ENCODE measurements at regions of chr22 and their contacts with region 1.

Region 1: GRCh38 chr22:37608477-37609239 is at the start of gene GGA1:
- DNase-seq: peak; percentile 94
- ATAC-seq: peak; percentile 85
- H3K4me3 ChIP-seq: peak within 1 kb of the TSS; percentile 78 to 92 (median 82)
- H3K27ac ChIP-seq: peak within 1 kb of the TSS; percentile 97
- H3K4me1 ChIP-seq: peaks cover 46% of the 10 kb centered on the region
- H3K27me3 ChIP-seq: peaks cover 2 to 5% of the 10 kb centered on the region in 2 experiments; a peak in 1 of 5 replicates
- CTCF ChIP-seq: no peak
- EP300 ChIP-seq: no peak; a peak in 1 of 4 replicates
- POLR2A ChIP-seq: peak; percentile 61 to 69
- RAD21 ChIP-seq: peak; percentile 24; the same call in 1 of the 2 replicates
- total RNA-seq, gene GGA1: 16.0 and 29.1 TPM in 2 replicates

Region 2: GRCh38 chr22:37538590-37539357 is 69.9 kb before region 1 on chr22:
- CTCF ChIA-PET with region 1: interaction called, 5 read pairs
- POLR2A ChIA-PET with region 1: interaction called, 14 read pairs
- in situ Hi-C with region 1: loop called (anchors 10 kb)
- intact Hi-C with region 1: no loop called
- DNase-seq: peak; percentile 88
- ATAC-seq: peak; percentile 98
- H3K4me3 ChIP-seq: peak overlapping the region in 1 of 3 experiments; percentile 32; a peak in 2 of 6 replicates
- H3K27ac ChIP-seq: no peak overlapping the region
- H3K4me1 ChIP-seq: peaks cover 77% of the 10 kb centered on the region
- H3K27me3 ChIP-seq: 0 out of 5 replicates have a peak, but pooled peaks cover 0 to 2% of the 10 kb centered on the region in 2 experiments
- CTCF ChIP-seq: peak; percentile 100
- EP300 ChIP-seq: peak; percentile 27 to 36; a peak in 2 of 4 replicates
- POLR2A ChIP-seq: no peak
- RAD21 ChIP-seq: peak; percentile 99

Region 3: DNA sequence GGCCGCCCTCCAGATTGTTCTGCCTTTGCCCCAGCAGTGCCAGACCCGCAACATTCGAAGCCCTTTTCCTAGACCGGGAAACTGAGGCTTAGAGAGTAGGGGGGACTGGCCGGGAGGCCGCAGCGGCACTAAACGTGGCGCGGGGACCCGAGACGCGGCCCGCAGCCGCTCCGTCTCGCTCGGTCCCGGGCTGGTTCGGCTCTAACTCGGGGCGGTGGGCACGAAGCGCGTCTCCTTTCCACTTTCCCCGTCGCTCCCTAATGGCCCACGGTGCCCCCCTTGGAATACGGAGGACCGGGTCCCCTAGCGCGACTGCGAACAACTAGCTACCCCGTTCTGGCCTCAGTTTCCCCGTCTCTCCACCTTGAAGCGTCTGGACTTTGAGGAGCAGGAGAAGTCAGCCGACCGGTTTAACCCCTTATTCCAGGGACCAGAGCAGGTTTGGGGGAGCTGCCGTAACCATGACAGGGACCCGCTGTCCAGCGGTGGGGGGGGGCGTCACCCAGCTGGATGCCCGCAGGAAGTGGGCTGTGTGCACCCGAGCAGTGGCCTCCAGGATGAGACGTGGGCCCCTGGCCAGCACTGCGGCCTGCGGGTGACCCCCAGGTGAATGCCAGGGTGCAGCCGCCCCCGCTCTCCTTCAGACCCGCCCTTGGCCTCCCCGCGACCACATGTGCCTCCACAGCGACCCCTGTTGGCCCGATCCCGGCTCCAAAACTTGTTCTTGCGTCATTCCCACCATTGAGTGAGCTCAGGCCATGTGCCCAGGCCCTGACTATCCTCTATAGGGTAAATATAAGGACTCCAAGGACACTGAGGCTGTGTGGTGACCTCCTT is 47.2 kb before region 1 on chr22:
- CTCF ChIA-PET with region 1: no interaction called
- POLR2A ChIA-PET with region 1: interaction called, 15 read pairs
- in situ Hi-C with region 1: no loop called
- intact Hi-C with region 1: no loop called
- DNase-seq: peak; percentile 85
- ATAC-seq: peak; percentile 45
- H3K4me3 ChIP-seq: peak overlapping the region; percentile 91 to 98 (median 98)
- H3K27ac ChIP-seq: peak overlapping the region; percentile 91
- H3K4me1 ChIP-seq: peaks cover 81% of the 10 kb centered on the region
- H3K27me3 ChIP-seq: no peaks in the 10 kb centered on the region; a peak in 2 of 5 replicates
- CTCF ChIP-seq: peak; percentile 97
- EP300 ChIP-seq: peak; percentile 69 to 73; a peak in 3 of 4 replicates
- POLR2A ChIP-seq: peak; percentile 73 to 75
- RAD21 ChIP-seq: peak; percentile 85

Region 4: DNA sequence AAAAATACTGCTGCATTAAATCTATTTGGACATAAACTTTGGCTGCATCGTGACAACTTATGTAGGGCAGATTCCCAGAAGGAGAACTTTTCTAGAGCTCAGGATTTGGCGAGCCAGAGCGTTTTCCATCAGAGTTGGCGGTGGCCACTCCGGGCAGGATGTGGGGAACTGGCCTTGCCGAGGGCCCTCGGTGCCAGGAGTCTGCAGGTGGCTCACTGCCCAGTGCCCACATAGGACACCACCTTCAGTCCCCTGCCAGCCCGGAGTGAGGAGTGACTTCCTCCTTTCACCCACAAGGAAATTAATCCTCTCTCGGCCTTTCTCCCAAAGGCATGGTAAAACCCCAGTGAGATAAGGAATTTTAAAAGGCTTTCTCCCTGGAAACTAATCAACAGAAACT is 27.2 kb before region 1 on chr22:
- CTCF ChIA-PET with region 1: no interaction called
- POLR2A ChIA-PET with region 1: interaction called, 23 read pairs
- in situ Hi-C with region 1: no loop called
- intact Hi-C with region 1: no loop called
- DNase-seq: no peak
- ATAC-seq: no peak
- H3K4me3 ChIP-seq: no peak overlapping the region
- H3K27ac ChIP-seq: no peak overlapping the region
- H3K4me1 ChIP-seq: peaks cover 72% of the 10 kb centered on the region
- H3K27me3 ChIP-seq: peaks cover 0 to 1% of the 10 kb centered on the region in 2 experiments; a peak in 1 of 5 replicates
- CTCF ChIP-seq: no peak
- EP300 ChIP-seq: no peak
- POLR2A ChIP-seq: no peak
- RAD21 ChIP-seq: no peak

Region 5: GRCh38 chr22:37633625-37634416 is 25.2 kb after region 1 on chr22:
- CTCF ChIA-PET with region 1: interaction called, 3 read pairs
- POLR2A ChIA-PET with region 1: interaction called, 75 read pairs
- in situ Hi-C with region 1: no loop called
- intact Hi-C with region 1: loop called (anchors 2 kb)
- DNase-seq: peak; percentile 85
- ATAC-seq: peak; percentile 67
- H3K4me3 ChIP-seq: peak overlapping the region; percentile 31 to 69 (median 51); a peak in 5 of 6 replicates
- H3K27ac ChIP-seq: peak overlapping the region; percentile 84
- H3K4me1 ChIP-seq: peaks cover 84% of the 10 kb centered on the region
- H3K27me3 ChIP-seq: no peaks in the 10 kb centered on the region
- CTCF ChIP-seq: peak; percentile 70
- EP300 ChIP-seq: peak in 1 of 2 experiments; percentile 4; a peak in 1 of 4 replicates
- POLR2A ChIP-seq: peak; percentile 51 to 76
- RAD21 ChIP-seq: 0 out of 2 replicates have a peak, but pooled peaks have one; percentile 15

Region 6: GRCh38 chr22:37658133-37659065 is 49.7 kb after region 1 on chr22 and contains the start of gene PDXP:
- CTCF ChIA-PET with region 1: no interaction called
- POLR2A ChIA-PET with region 1: interaction called, 36 read pairs
- in situ Hi-C with region 1: no loop called
- intact Hi-C with region 1: no loop called
- DNase-seq: peak; percentile 99
- ATAC-seq: peak; percentile 94
- H3K4me3 ChIP-seq: peak within 1 kb of the TSS; percentile 75 to 97 (median 94)
- H3K27ac ChIP-seq: peak within 1 kb of the TSS; percentile 93
- H3K4me1 ChIP-seq: peaks cover 51% of the 10 kb centered on the region
- H3K27me3 ChIP-seq: no peaks in the 10 kb centered on the region; a peak in 1 of 5 replicates
- CTCF ChIP-seq: no peak
- EP300 ChIP-seq: no peak; a peak in 1 of 4 replicates
- POLR2A ChIP-seq: peak in 1 of 2 experiments; percentile 91
- RAD21 ChIP-seq: peak; percentile 55
- total RNA-seq, gene PDXP: 46.1 and 58.2 TPM in 2 replicates

Measured in HepG2 (cell line).